B cell (primary cell): ENCODE measurements at regions of chr7 and their contacts with region 1.

Region 1: DNA sequence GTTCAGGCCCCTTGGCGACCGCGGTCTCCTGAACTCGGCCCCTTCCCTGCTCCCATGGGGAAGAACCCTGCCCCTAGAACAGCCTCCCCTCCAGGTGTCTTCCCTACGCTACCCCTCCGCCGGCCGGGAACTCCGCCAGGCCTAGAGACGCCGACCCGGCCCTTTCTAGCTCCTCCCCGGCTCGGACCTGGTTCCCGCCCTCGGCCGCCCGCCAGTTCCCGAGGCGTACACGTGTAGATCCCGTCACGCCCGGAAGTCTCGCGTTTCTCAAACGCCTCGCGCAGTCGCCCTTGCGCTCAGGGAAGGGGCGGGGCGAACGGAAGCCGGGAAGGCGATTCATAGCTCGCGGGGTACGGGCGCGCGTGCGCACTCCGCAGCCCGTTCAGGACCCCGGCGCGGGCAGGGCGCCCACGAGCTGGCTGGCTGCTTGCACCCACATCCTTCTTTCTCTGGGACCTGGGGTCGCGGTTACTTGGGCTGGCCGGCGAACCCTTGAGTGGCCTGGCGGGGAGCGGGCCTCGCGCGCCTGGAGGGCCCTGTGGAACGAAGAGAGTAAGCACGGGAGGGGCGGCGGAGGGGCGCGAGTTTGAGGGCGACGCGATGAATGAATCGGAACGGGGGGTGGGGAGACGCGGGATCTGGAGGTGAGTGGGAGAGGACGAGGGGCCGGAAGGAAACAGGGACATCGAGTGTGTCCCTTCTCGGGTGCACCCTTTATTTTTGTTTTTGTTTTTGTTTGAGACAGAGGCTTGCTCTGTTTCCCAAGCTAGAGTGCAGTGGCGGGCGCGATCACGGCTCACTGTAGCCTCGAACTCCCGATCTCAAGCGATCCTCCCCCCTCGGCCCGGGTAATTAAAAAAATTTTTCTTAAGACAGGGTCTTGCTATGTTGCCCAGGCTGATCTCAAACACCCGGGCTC is at the start of gene POP7:
- DNase-seq: peak; percentile 98
- ATAC-seq: peak; percentile 94
- H3K4me3 ChIP-seq: peak within 1 kb of the TSS; percentile 57 to 96 (median 87)
- H3K4me3 Mint-ChIP-seq: peak within 1 kb of the TSS; percentile 94
- H3K27ac ChIP-seq: peak within 1 kb of the TSS; percentile 79 to 86
- H3K27ac Mint-ChIP-seq: peak within 1 kb of the TSS; percentile 96
- H3K4me1 ChIP-seq: peaks cover 8 to 20% of the 10 kb centered on the region in 2 donors
- H3K4me1 Mint-ChIP-seq: peaks cover 20% of the 10 kb centered on the region
- H3K27me3 ChIP-seq: no peaks in the 10 kb centered on the region
- H3K27me3 Mint-ChIP-seq: no peaks in the 10 kb centered on the region
- CTCF ChIP-seq: no peak
- total RNA-seq, gene POP7: 13.0 and 14.4 TPM in 2 replicates

Region 2: DNA sequence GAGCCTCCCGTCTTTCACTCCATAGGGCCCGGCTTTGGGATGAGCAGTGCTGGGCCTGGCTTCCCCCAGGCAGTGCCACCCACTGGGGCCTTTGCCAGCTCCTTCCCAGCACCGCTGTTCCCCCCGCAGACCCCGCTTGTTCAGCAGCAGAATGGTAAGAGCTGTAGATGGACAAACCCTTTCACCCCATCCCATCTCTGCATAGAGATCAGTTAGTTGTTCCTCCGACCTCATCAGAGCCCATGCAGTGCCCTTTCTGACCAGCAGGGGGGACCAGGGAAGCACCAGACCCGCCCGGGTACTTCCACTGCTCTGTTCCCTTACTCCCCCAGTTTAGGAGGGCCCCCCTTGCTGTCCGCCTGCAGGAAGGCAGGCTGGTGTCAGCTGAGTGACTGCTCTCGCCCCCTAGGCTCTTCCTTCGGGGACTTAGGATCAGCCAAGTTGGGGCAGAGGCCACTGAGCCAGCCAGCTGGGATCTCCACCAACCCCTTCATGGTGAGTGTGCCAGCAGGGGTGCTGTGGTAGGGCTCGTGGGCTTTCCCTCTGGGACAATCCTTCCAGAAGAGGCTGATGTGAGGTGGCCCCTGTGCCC is 142.1 kb before region 1 on chr7:
- CTCF ChIA-PET with region 1: interaction called, 12 read pairs
- POLR2A ChIA-PET with region 1: interaction called, 9 read pairs
- intact Hi-C with region 1: no loop called
- DNase-seq: peak; percentile 85
- ATAC-seq: peak; percentile 77
- H3K4me3 ChIP-seq: no peak overlapping the region
- H3K4me3 Mint-ChIP-seq: no peak overlapping the region
- H3K27ac ChIP-seq: no peak overlapping the region
- H3K27ac Mint-ChIP-seq: no peak overlapping the region
- H3K4me1 ChIP-seq: peaks cover 20 to 29% of the 10 kb centered on the region in 2 donors
- H3K4me1 Mint-ChIP-seq: peaks cover 26% of the 10 kb centered on the region
- H3K27me3 ChIP-seq: no peaks in the 10 kb centered on the region
- H3K27me3 Mint-ChIP-seq: no peaks in the 10 kb centered on the region
- CTCF ChIP-seq: peak; percentile 94

Region 3: GRCh38 chr7:100611974-100612729 is 93.9 kb before region 1 on chr7 and contains the start of gene MOSPD3:
- CTCF ChIA-PET with region 1: interaction called, 16 read pairs
- POLR2A ChIA-PET with region 1: interaction called, 6 read pairs
- intact Hi-C with region 1: no loop called
- DNase-seq: peak; percentile 99
- ATAC-seq: peak; percentile 91
- H3K4me3 ChIP-seq: peak within 1 kb of the TSS; percentile 53 to 93 (median 84)
- H3K4me3 Mint-ChIP-seq: peak within 1 kb of the TSS; percentile 93
- H3K27ac ChIP-seq: peak within 1 kb of the TSS; percentile 82
- H3K27ac Mint-ChIP-seq: peak within 1 kb of the TSS; percentile 99
- H3K4me1 ChIP-seq: peaks cover 13 to 19% of the 10 kb centered on the region in 2 donors
- H3K4me1 Mint-ChIP-seq: peaks cover 18% of the 10 kb centered on the region
- H3K27me3 ChIP-seq: no peaks in the 10 kb centered on the region
- H3K27me3 Mint-ChIP-seq: no peaks in the 10 kb centered on the region
- CTCF ChIP-seq: no peak
- total RNA-seq, gene MOSPD3: 17.3 and 18.8 TPM in 2 replicates

Region 4: GRCh38 chr7:100680167-100680575 is 25.8 kb before region 1 on chr7:
- CTCF ChIA-PET with region 1: interaction called, 14 read pairs
- POLR2A ChIA-PET with region 1: interaction called, 16 read pairs
- intact Hi-C with region 1: no loop called
- DNase-seq: peak; percentile 28
- ATAC-seq: no peak
- H3K4me3 ChIP-seq: no peak overlapping the region
- H3K4me3 Mint-ChIP-seq: no peak overlapping the region
- H3K27ac ChIP-seq: no peak overlapping the region
- H3K27ac Mint-ChIP-seq: peak overlapping the region; percentile 46
- H3K4me1 ChIP-seq: peaks cover 0 to 3% of the 10 kb centered on the region in 2 donors
- H3K4me1 Mint-ChIP-seq: peaks cover 7% of the 10 kb centered on the region
- H3K27me3 ChIP-seq: no peaks in the 10 kb centered on the region
- H3K27me3 Mint-ChIP-seq: no peaks in the 10 kb centered on the region
- CTCF ChIP-seq: no peak

Region 5: GRCh38 chr7:100803398-100804233 is 97.6 kb after region 1 on chr7:
- CTCF ChIA-PET with region 1: interaction called, 8 read pairs
- POLR2A ChIA-PET with region 1: interaction called, 3 read pairs
- intact Hi-C with region 1: loop called (anchors 1 kb)
- DNase-seq: peak; percentile 90
- ATAC-seq: peak; percentile 98
- H3K4me3 ChIP-seq: peak overlapping the region in 4 of 5 experiments; percentile 54 to 65 (median 56)
- H3K4me3 Mint-ChIP-seq: peak overlapping the region; percentile 86
- H3K27ac ChIP-seq: peak overlapping the region; percentile 84 to 94
- H3K27ac Mint-ChIP-seq: peak overlapping the region; percentile 86
- H3K4me1 ChIP-seq: peaks cover 28 to 35% of the 10 kb centered on the region in 2 donors
- H3K4me1 Mint-ChIP-seq: peaks cover 38% of the 10 kb centered on the region
- H3K27me3 ChIP-seq: no peaks in the 10 kb centered on the region
- H3K27me3 Mint-ChIP-seq: no peaks in the 10 kb centered on the region
- CTCF ChIP-seq: no peak

Region 6: GRCh38 chr7:101085162-101085987 is 379.4 kb after region 1 on chr7 and contains the start of gene TRIM56:
- CTCF ChIA-PET with region 1: interaction called, 3 read pairs
- POLR2A ChIA-PET with region 1: no interaction called
- intact Hi-C with region 1: loop called (anchors 1 kb)
- DNase-seq: peak; percentile 83
- ATAC-seq: peak; percentile 97
- H3K4me3 ChIP-seq: peak within 1 kb of the TSS; percentile 88 to 98 (median 92)
- H3K4me3 Mint-ChIP-seq: peak within 1 kb of the TSS; percentile 98
- H3K27ac ChIP-seq: peak within 1 kb of the TSS; percentile 86 to 96
- H3K27ac Mint-ChIP-seq: peak within 1 kb of the TSS; percentile 98
- H3K4me1 ChIP-seq: peaks cover 16 to 29% of the 10 kb centered on the region in 2 donors
- H3K4me1 Mint-ChIP-seq: peaks cover 22% of the 10 kb centered on the region
- H3K27me3 ChIP-seq: no peaks in the 10 kb centered on the region
- H3K27me3 Mint-ChIP-seq: peaks cover 3% of the 10 kb centered on the region
- CTCF ChIP-seq: no peak
- total RNA-seq, gene TRIM56: 76.1 and 85.7 TPM in 2 replicates